H1 (cell line): ENCODE measurements at regions of chr15 and their contacts with region 1.

Region 1: DNA sequence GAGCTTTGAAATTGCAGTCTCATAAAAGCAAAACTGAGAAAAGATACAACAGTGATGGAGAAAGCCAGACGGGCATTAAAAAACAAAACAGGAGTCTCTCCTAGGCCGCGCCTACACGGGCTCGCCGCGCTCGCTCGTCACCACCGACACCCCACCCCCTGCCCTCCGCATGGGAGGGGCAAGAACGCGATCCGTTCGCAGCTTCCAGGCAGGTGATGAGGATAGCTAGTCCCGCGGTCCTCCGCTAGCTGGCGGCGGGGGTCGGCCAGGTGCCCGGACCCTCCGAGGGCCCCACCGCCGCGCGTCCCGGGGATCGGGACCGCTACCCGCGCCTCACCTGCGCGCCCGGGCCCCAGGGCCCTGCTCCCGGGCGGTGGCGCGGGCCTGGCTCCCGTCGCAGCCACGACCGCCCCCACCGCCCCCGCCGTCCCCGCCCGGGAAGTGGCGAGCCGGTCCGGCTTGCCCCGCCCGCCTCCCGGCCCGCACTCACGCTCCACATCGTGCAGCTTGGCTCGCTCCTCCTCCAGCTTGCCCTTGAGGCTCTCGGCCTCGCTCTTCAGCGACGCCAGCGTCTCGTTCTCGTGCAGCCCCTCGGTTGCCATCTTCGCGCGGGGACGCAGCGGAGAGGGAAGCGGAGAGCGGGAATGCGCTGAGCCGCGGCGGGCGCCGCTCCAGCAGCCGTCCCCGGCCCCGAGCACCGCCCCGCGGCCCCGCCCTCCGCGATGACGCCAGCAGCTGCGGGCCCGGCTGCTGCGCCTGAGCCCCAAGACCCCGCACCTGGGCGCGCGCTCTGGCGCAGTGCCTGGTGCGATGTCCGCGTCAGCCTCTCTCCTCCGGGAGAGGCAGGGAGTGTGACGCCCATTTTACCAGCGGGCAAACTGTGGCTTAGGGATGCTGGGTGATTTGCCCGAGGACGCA is 11.7 kb downstream of the GNB5 start:
- DNase-seq: peak; percentile 56 to 92
- H3K4me3 ChIP-seq: peak overlapping the region; percentile 63 to 98 (median 81)
- H3K27ac ChIP-seq: peak overlapping the region; percentile 76; the same call in 1 of the 2 replicates
- H3K4me1 ChIP-seq: peaks cover 1 to 9% (median 3%) of the 10 kb centered on the region in 4 experiments; a peak in 4 of 7 replicates
- H3K27me3 ChIP-seq: peaks cover 0 to 8% (median 7%) of the 10 kb centered on the region in 4 experiments; a peak in 4 of 7 replicates
- CTCF ChIP-seq: no peak
- EP300 ChIP-seq: no peak; a peak in 1 of 3 replicates
- POLR2A ChIP-seq: peak; percentile 79 to 87
- RAD21 ChIP-seq: 0 out of 4 replicates have a peak, but pooled peaks of 1 of the 2 experiments have one; percentile 1

Region 2: GRCh38 chr15:51992976-51993375 is 186.6 kb before region 1 on chr15:
- CTCF ChIA-PET with region 1: no interaction called
- POLR2A ChIA-PET with region 1: no interaction called
- DNase-seq: no peak
- H3K4me3 ChIP-seq: no peak overlapping the region
- H3K27ac ChIP-seq: no peak overlapping the region
- H3K4me1 ChIP-seq: no peaks in the 10 kb centered on the region
- H3K27me3 ChIP-seq: no peaks in the 10 kb centered on the region
- CTCF ChIP-seq: no peak
- EP300 ChIP-seq: no peak
- POLR2A ChIP-seq: no peak
- RAD21 ChIP-seq: no peak

Region 3: GRCh38 chr15:52163321-52164190 is 16.0 kb before region 1 on chr15:
- CTCF ChIA-PET with region 1: interaction called, 95 read pairs
- POLR2A ChIA-PET with region 1: interaction called, 9 read pairs
- DNase-seq: peak in 1 of 2 experiments; percentile 79
- H3K4me3 ChIP-seq: no peak overlapping the region
- H3K27ac ChIP-seq: peak overlapping the region; percentile 29
- H3K4me1 ChIP-seq: no peaks in the 10 kb centered on the region; a peak in 2 of 7 replicates
- H3K27me3 ChIP-seq: no peaks in the 10 kb centered on the region
- CTCF ChIP-seq: peak; percentile 69 to 77 (median 74)
- EP300 ChIP-seq: no peak
- POLR2A ChIP-seq: no peak
- RAD21 ChIP-seq: peak; percentile 57 to 67

Region 4: DNA sequence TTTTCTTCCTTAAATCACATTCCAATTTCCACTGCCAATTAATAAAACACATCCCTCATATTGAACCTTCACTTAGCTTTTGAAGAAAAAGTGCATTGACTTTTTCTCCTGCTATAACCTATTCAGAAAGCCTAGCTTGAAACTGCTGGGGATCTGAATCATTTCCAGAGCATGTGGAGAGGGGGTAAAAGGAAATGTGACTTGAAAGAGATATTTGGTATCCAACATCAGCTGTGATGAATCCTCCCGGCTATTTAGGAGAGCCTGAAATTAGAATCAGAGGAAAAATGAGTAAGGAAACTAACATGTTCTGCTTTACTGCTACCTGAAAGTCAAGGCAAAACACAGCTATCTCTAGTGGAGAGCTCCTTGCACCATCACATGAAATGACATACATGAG is 14.3 kb after region 1 on chr15:
- CTCF ChIA-PET with region 1: interaction called, 189 read pairs
- POLR2A ChIA-PET with region 1: no interaction called
- DNase-seq: no peak
- H3K4me3 ChIP-seq: no peak overlapping the region
- H3K27ac ChIP-seq: no peak overlapping the region
- H3K4me1 ChIP-seq: no peaks in the 10 kb centered on the region; a peak in 1 of 7 replicates
- H3K27me3 ChIP-seq: no peaks in the 10 kb centered on the region
- CTCF ChIP-seq: no peak
- EP300 ChIP-seq: no peak
- POLR2A ChIP-seq: no peak
- RAD21 ChIP-seq: no peak

Region 5: DNA sequence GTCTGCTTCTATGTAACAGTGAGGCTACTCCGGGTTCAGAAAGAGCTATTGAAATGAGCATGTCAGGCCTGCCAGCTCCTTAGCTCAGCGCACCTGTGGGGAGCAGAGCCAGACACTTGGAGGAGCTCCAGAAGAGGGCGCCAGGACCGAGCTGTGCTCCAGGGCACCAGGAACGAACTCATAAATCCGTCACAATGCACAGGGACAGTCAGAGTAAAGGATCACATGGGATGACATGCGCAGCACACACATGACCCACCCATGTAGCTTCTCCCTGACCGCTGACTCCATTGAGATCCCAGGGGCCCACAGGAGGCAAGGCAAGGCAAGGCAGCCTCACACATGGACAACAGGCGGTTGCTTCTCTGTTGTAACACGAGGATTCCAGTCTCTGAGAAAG is 37.6 kb after region 1 on chr15:
- CTCF ChIA-PET with region 1: interaction called, 27 read pairs
- POLR2A ChIA-PET with region 1: no interaction called
- DNase-seq: peak; percentile 27 to 72
- H3K4me3 ChIP-seq: no peak overlapping the region
- H3K27ac ChIP-seq: no peak overlapping the region
- H3K4me1 ChIP-seq: no peaks in the 10 kb centered on the region
- H3K27me3 ChIP-seq: no peaks in the 10 kb centered on the region
- CTCF ChIP-seq: peak; percentile 60 to 75 (median 72)
- EP300 ChIP-seq: no peak
- POLR2A ChIP-seq: no peak
- RAD21 ChIP-seq: peak; percentile 29 to 55; a peak in 3 of 4 replicates

Region 6: GRCh38 chr15:52246686-52247431 is 67.3 kb after region 1 on chr15:
- CTCF ChIA-PET with region 1: no interaction called
- POLR2A ChIA-PET with region 1: no interaction called
- DNase-seq: no peak
- H3K4me3 ChIP-seq: no peak overlapping the region
- H3K27ac ChIP-seq: no peak overlapping the region
- H3K4me1 ChIP-seq: no peaks in the 10 kb centered on the region
- H3K27me3 ChIP-seq: no peaks in the 10 kb centered on the region
- CTCF ChIP-seq: no peak
- EP300 ChIP-seq: no peak
- POLR2A ChIP-seq: no peak
- RAD21 ChIP-seq: no peak